ENCODE measurements at regions of chr14 and their contacts with region 1.

Region 1: GRCh38 chr14:61080591-61081010 is 99.6 kb downstream of the SLC38A6 start:
- DNase-seq: peak; percentile 81
- H3K4me3 ChIP-seq: no peak overlapping the region
- CTCF ChIP-seq: peak; percentile 16

Region 2: GRCh38 chr14:61147831-61148549 is 67.4 kb after region 1 on chr14:
- in situ Hi-C with region 1: loop called (anchors 10 kb)
- DNase-seq: peak; percentile 100
- H3K4me3 ChIP-seq: no peak overlapping the region
- CTCF ChIP-seq: no peak

Measured in astrocyte of the cerebellum (primary cell).